ENCODE measurements at regions of chr13 and their contacts with region 1.

Region 1: DNA sequence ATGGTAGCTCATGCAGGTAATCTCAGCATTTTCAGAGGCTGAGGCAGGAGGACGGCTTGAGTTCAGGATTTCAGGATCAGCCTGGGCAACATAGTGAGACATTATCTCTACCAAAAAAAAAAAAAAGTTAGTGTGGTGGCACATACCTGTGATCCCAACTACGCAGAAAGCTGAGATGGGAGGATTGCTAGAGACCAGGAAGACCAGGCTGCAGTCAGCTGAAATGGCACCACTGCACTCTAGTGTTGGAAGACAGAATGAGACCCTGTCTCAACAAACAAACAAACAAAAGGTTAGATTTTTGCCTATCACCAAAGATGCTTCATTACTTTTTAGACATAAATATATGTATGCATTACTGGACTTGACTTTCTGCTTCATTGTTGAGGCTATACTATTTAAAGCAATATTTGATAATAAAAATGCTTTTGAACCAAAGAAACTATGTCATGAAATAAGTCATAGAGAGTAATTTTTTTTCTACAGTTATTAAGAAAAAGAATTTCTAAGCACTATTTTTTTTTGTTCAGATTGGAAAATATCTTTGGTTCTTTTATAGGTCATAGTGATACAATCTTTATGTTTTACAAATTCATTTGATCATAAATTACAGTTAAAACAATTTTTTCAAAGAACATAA is 1180.1 kb upstream of the ATXN8OS start:
- DNase-seq: peak; percentile 1
- H3K4me3 ChIP-seq: no peak overlapping the region
- H3K27ac ChIP-seq: no peak overlapping the region
- H3K4me1 ChIP-seq: no peaks in the 10 kb centered on the region
- H3K27me3 ChIP-seq: no peaks in the 10 kb centered on the region
- CTCF ChIP-seq: peak; percentile 15 to 23
- POLR2A ChIP-seq: no peak

Region 2: DNA sequence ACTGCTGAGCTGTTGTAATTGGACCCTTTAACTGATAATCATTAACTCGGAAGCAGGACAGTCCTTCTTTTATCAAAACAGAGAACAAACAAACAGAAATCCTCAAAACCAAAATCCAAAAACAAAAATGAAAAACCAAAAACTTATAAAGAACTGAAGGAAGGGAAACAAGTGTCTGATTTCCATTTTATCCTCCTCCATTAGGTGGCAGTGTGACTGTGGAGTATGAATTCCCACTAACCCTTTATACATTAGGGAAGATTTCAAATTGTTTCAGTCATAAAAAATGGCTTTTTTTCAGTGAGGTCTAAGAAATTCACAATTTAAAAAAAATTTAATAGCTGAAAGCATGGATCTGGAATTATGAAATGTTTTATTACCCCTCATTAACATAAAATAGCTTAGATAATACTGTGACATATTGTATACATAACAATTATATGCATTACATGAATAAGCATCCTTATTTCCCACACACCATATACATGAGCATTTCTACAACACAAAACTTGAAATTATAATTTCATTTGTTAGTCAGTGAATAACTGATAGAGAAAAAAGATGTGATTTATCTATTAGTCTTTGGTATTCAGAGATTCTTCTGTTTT is 623.1 kb before region 1 on chr13:
- CTCF ChIA-PET with region 1: interaction called, 25 read pairs
- POLR2A ChIA-PET with region 1: no interaction called
- dilution Hi-C with region 1: no loop called
- intact Hi-C with region 1: loop called (anchors 1 kb)
- DNase-seq: peak; percentile 14
- H3K4me3 ChIP-seq: no peak overlapping the region
- H3K27ac ChIP-seq: no peak overlapping the region
- H3K4me1 ChIP-seq: no peaks in the 10 kb centered on the region
- H3K27me3 ChIP-seq: no peaks in the 10 kb centered on the region
- CTCF ChIP-seq: peak; percentile 35 to 42
- POLR2A ChIP-seq: no peak

Region 3: DNA sequence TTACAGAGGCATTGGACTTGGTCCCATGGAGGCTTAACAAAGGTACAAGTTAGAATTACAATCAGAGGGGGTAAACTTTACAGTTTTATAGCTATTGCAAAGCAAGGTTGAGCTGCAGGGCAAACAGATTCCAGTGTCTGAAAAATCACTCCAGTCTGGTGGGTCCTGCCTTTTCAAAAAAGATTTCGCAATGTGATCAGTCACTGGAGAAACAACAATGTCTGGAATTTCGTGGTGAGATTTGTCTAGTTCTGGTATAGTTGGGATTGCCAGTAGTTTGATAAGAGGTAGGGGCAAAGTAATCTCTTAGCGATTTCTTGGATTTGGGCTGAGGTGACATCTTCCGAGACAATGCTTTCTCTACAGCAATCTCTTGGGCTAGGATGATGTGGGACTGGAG is 499.2 kb before region 1 on chr13:
- CTCF ChIA-PET with region 1: no interaction called
- POLR2A ChIA-PET with region 1: no interaction called
- dilution Hi-C with region 1: no loop called
- intact Hi-C with region 1: loop called (anchors 1 kb)
- DNase-seq: no peak
- H3K4me3 ChIP-seq: no peak overlapping the region
- H3K27ac ChIP-seq: no peak overlapping the region
- H3K4me1 ChIP-seq: no peaks in the 10 kb centered on the region
- H3K27me3 ChIP-seq: no peaks in the 10 kb centered on the region
- CTCF ChIP-seq: no peak
- POLR2A ChIP-seq: no peak

Region 4: GRCh38 chr13:69306766-69307165 is 379.3 kb after region 1 on chr13:
- CTCF ChIA-PET with region 1: no interaction called
- POLR2A ChIA-PET with region 1: no interaction called
- dilution Hi-C with region 1: no loop called
- intact Hi-C with region 1: no loop called
- DNase-seq: no peak
- H3K4me3 ChIP-seq: no peak overlapping the region
- H3K27ac ChIP-seq: no peak overlapping the region
- H3K4me1 ChIP-seq: no peaks in the 10 kb centered on the region
- H3K27me3 ChIP-seq: no peaks in the 10 kb centered on the region
- CTCF ChIP-seq: no peak
- POLR2A ChIP-seq: no peak

Region 5: DNA sequence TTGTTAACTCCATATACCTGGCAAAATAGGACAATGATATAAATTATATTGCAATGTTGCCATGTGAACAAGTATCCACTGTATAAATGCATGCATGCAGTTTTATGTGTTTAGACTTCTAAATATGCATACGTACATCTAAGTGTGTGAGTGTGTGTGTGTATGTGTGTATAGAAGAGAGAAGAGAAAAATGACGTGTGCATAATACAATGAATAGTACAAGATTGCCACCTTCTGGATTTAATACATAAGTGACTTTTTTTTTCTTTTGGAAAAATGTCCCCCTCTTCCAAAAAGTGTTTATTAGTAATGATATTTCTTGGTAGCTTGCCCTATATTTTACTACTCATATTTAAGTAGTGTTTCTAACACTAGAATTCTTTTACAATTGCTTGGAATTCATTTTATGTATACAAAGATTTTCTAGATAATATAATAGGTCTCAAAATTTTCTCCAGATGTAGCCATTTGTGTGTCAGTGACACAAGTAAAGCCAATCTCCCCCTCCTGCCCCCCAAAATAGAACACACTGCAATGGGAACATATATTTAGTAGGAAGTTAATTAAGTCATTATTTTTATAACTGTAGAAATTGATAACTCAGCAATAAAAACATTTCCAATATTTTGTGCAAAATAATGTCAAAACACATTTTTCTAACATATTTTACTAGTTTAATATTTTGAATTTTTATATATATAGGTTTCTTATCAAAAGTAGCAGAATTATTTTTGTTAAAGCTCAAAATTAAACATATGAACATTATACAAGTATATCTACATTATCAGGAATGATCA is 396.8 kb after region 1 on chr13:
- CTCF ChIA-PET with region 1: no interaction called
- POLR2A ChIA-PET with region 1: no interaction called
- dilution Hi-C with region 1: no loop called
- intact Hi-C with region 1: loop called (anchors 10 kb)
- DNase-seq: no peak
- H3K4me3 ChIP-seq: no peak overlapping the region
- H3K27ac ChIP-seq: no peak overlapping the region
- H3K4me1 ChIP-seq: no peaks in the 10 kb centered on the region
- H3K27me3 ChIP-seq: no peaks in the 10 kb centered on the region
- CTCF ChIP-seq: no peak
- POLR2A ChIP-seq: no peak